ENCODE measurements at regions of chrX and their contacts with region 1.

Region 1: GRCh38 chrX:78957768-78958130 is 12.6 kb downstream of the P2RY10 start:
- DNase-seq: no peak
- ATAC-seq: no peak
- H3K4me3 ChIP-seq: no peak overlapping the region
- H3K4me3 Mint-ChIP-seq: no peak overlapping the region
- H3K27ac ChIP-seq: peak overlapping the region in 1 of 2 experiments; percentile 55
- H3K27ac Mint-ChIP-seq: peak overlapping the region; percentile 89
- H3K4me1 ChIP-seq: peaks cover 41% of the 10 kb centered on the region
- H3K4me1 Mint-ChIP-seq: peaks cover 67% of the 10 kb centered on the region
- H3K27me3 ChIP-seq: no peaks in the 10 kb centered on the region
- H3K27me3 Mint-ChIP-seq: no peaks in the 10 kb centered on the region
- CTCF ChIP-seq: no peak

Region 2: GRCh38 chrX:79366873-79367749 is 409.4 kb after region 1 on chrX and contains the start of gene ITM2A:
- CTCF ChIA-PET with region 1: no interaction called
- POLR2A ChIA-PET with region 1: no interaction called
- intact Hi-C with region 1: loop called in 1 of 2 experiments (anchors 10 kb)
- DNase-seq: peak; percentile 27 to 81 (median 64)
- ATAC-seq: peak; percentile 80
- H3K4me3 ChIP-seq: peak within 1 kb of the TSS; percentile 54 to 85
- H3K4me3 Mint-ChIP-seq: peak within 1 kb of the TSS; percentile 95
- H3K27ac ChIP-seq: peak within 1 kb of the TSS; percentile 79 to 94
- H3K27ac Mint-ChIP-seq: peak within 1 kb of the TSS; percentile 97
- H3K4me1 ChIP-seq: peaks cover 18% of the 10 kb centered on the region
- H3K4me1 Mint-ChIP-seq: peaks cover 39% of the 10 kb centered on the region
- H3K27me3 ChIP-seq: no peaks in the 10 kb centered on the region
- H3K27me3 Mint-ChIP-seq: no peaks in the 10 kb centered on the region
- CTCF ChIP-seq: no peak
- total RNA-seq, gene ITM2A: 123 to 125 TPM